Right cardiac atrium (tissue), 5 donors: ENCODE measurements at regions of chr5 and their contacts with region 1.

Region 1: DNA sequence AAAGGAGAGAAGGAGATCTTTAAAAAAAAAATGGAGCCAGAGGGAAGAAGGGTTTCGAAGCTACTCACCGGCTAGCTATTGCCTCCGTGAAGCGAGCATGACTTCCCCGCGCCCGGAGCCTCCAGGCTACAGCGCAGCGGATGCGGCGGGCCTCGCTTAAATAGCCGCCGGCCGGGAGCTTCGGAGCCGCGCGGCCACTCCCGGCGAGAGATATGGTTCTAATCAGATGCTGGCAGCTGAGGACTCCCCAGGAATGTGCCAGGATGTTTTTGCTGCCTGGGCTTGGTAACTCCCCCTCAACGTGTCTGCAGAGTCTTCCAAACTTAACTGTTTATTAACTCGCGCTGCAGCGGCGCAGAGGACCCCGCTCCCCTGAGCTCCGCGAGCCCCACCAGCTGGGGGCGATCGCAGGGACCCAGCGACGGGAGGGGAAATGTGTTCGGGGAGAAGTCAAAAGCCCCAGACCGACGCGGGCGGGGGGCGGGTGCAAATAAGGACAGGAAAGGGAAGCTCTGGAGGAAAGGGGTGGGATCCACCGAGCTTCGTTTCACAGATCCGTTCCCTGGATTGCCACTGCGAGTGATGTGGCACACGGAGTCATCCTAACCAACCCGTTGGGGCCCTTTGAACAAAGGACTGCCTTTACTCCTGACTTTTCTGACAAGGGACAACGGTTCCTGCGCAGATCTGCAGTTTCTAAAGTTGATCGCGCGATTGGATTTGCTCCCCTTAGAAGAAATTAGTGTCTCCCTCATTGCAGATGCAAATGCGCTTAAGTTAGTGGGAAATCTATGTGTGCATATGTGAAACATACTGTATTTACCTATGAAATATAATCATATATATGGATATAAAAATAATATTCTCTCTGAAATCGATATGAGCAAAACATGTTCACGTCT is at the start of gene DAB2:
- DNase-seq: peak; percentile 86 to 94 (median 94)
- ATAC-seq: peak; percentile 87 to 89
- H3K4me3 ChIP-seq: peak within 1 kb of the TSS; percentile 76
- H3K27ac ChIP-seq: peak within 1 kb of the TSS; percentile 89
- H3K4me1 ChIP-seq: no peaks in the 10 kb centered on the region
- H3K27me3 ChIP-seq: no peaks in the 10 kb centered on the region
- total RNA-seq, gene DAB2: 21.8 to 27.8 (median 24.6) TPM

Region 2: DNA sequence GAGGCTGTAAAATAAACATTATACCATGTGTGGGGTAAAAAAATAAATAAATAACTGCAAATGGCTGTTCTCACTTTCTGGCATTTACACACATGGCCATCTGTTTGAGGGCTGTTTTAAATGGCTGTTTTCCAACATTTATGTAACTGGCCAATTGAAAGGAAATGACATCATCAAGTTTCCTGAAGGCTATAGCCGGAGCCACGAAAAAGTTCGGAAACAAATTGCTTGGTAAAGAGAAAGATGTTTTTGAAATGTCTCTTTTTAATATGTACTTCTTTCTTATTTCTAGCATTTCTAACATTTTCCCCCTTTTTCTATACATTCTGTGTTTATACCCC is 95.2 kb after region 1 on chr5:
- intact Hi-C with region 1: loop called in 1 of 4 experiments (anchors 10 kb)
- DNase-seq: no peak
- ATAC-seq: peak; percentile 76 to 80
- H3K4me3 ChIP-seq: peak overlapping the region; percentile 35
- H3K27ac ChIP-seq: no peak overlapping the region
- H3K4me1 ChIP-seq: no peaks in the 10 kb centered on the region
- H3K27me3 ChIP-seq: no peaks in the 10 kb centered on the region